Breast epithelium (tissue), 4 donors: ENCODE measurements at regions of chr6 and their contacts with region 1.

Region 1: GRCh38 chr6:71012866-71013469 is 56.1 kb upstream of the B3GAT2 start:
- DNase-seq: no peak
- H3K4me3 ChIP-seq: no peak overlapping the region
- H3K27ac ChIP-seq: no peak overlapping the region
- H3K4me1 ChIP-seq: no peaks in the 10 kb centered on the region
- H3K27me3 ChIP-seq: no peaks in the 10 kb centered on the region
- CTCF ChIP-seq: peak in 2 of 3 donors; percentile 56
- POLR2A ChIP-seq: no peak

Region 2: GRCh38 chr6:72084992-72085569 is 1072.1 kb after region 1 on chr6:
- intact Hi-C with region 1: loop called (anchors 5 kb)
- DNase-seq: no peak
- H3K4me3 ChIP-seq: no peak overlapping the region
- H3K27ac ChIP-seq: no peak overlapping the region
- H3K4me1 ChIP-seq: no peaks in the 10 kb centered on the region
- H3K27me3 ChIP-seq: no peaks in the 10 kb centered on the region
- CTCF ChIP-seq: peak in 2 of 3 donors; percentile 23 to 54
- POLR2A ChIP-seq: no peak